ENCODE measurements at regions of chr1 and their contacts with region 1.

Region 1: GRCh38 chr1:53278201-53278725 is 39.9 kb upstream of the MAGOH start:
- H3K4me3 ChIP-seq: no peak overlapping the region
- H3K27ac ChIP-seq: no peak overlapping the region
- H3K4me1 ChIP-seq: no peaks in the 10 kb centered on the region
- CTCF ChIP-seq: peak; percentile 54

Region 2: DNA sequence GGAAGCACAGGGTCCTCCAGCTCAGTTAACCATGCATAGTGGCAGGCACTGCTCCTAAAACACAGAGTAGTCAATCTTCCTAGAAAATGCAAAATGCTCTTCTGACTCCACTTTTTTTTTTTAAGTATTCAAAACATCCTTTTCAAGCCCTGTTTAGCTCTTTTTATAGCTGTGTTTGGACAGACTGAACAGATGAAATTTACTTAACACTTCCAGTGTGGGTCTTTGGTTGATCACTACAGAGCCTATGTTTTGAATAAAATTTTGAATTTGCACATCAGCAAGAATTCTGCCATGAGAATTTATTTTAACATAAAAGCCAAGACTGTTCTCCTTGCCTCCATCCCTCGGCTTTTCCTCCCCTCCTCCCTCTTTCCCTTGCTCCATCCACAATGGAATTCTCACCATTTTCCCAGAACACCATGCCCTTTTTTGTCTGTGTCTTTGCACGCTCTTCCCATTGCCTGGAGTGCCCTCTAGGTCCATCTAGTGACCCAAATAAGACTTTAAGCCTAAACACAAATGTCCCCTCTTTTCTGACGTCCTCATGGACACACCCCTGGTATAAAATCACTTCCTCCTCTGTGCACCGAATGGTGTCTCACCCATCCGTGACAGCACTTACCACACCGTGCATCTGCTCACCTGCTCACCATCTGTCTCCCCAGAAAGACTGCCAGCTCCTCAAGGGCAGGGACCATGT is 105.7 kb before region 1 on chr1:
- CTCF ChIA-PET with region 1: no interaction called
- POLR2A ChIA-PET with region 1: no interaction called
- H3K4me3 ChIP-seq: no peak overlapping the region
- H3K27ac ChIP-seq: no peak overlapping the region
- H3K4me1 ChIP-seq: no peaks in the 10 kb centered on the region; the same call in 1 of the 2 replicates
- CTCF ChIP-seq: no peak

Region 3: DNA sequence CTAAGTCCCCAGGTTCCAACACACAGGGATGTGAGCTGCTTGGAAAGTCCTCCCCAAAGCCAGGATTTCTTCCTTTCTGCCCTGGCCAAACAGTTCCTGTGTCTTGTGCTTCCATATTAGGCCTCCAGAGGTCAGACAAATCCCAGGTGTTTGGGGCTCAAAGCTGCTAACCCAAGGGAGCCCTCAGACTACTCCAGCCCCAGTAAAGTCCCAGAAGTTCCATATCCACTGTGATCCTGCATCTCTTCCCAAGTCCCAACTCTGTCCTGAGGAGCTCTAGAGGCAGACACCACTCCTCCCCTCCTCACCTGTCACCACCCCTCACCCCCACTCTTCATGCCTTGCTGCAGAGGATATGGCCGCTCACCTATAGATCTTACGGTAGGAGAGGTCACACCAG is 12.2 kb before region 1 on chr1:
- CTCF ChIA-PET with region 1: interaction called, 23 read pairs
- POLR2A ChIA-PET with region 1: no interaction called
- H3K4me3 ChIP-seq: no peak overlapping the region
- H3K27ac ChIP-seq: no peak overlapping the region
- H3K4me1 ChIP-seq: no peaks in the 10 kb centered on the region
- CTCF ChIP-seq: peak; percentile 33; the same call in 1 of the 2 replicates

Region 4: DNA sequence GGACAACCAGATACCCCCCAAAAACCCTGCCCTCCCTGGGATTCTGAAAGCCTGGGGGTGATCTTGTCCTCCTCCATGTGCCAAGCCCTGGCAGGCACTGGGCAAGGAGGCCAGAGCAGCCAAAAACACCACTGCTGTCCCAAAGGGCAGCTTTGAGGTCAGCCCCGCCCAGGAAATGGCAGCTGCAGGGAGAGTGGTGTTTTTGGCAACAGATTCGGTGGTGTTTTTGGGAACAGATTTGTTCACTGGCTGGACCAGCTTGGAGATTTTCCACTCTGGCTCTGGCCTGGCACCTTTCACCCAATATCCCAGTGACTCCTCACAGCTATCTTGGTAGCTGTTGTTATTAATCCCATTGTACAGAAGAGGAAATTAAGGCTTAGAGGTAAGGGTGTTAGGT is 14.9 kb after region 1 on chr1:
- CTCF ChIA-PET with region 1: interaction called, 56 read pairs
- POLR2A ChIA-PET with region 1: no interaction called
- H3K4me3 ChIP-seq: no peak overlapping the region
- H3K27ac ChIP-seq: no peak overlapping the region
- H3K4me1 ChIP-seq: no peaks in the 10 kb centered on the region
- CTCF ChIP-seq: no peak

Region 5: DNA sequence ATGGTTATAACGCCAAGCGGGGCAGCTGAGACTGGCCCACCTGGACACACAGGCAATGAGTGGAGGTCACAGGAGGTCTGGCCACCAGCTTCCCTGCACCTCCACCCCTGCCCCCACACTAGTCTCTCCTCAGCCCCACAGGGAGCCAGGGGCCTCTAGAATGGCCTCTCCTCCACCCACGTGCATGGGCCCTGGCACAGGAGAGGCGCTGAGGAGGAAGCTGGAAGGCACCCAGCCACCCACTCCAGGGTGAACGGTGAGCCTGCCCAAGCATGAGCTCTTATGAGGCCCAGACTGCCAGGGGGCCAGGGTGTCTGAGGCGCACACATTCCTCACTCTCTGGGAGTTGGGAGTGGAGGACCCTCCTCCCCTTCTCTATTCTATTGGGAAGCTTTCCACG is 27.4 kb after region 1 on chr1:
- CTCF ChIA-PET with region 1: no interaction called
- POLR2A ChIA-PET with region 1: no interaction called
- H3K4me3 ChIP-seq: no peak overlapping the region
- H3K27ac ChIP-seq: no peak overlapping the region
- H3K4me1 ChIP-seq: no peaks in the 10 kb centered on the region
- CTCF ChIP-seq: no peak

Region 6: GRCh38 chr1:53376041-53376461 is 97.8 kb after region 1 on chr1:
- CTCF ChIA-PET with region 1: interaction called, 12 read pairs
- POLR2A ChIA-PET with region 1: no interaction called
- H3K4me3 ChIP-seq: no peak overlapping the region
- H3K27ac ChIP-seq: no peak overlapping the region
- H3K4me1 ChIP-seq: no peaks in the 10 kb centered on the region
- CTCF ChIP-seq: no peak

Region 7: GRCh38 chr1:53393325-53393792 is 115.1 kb after region 1 on chr1:
- CTCF ChIA-PET with region 1: interaction called, 172 read pairs
- POLR2A ChIA-PET with region 1: interaction called, 3 read pairs
- H3K4me3 ChIP-seq: no peak overlapping the region
- H3K27ac ChIP-seq: no peak overlapping the region
- H3K4me1 ChIP-seq: no peaks in the 10 kb centered on the region
- CTCF ChIP-seq: peak; percentile 76

Region 8: DNA sequence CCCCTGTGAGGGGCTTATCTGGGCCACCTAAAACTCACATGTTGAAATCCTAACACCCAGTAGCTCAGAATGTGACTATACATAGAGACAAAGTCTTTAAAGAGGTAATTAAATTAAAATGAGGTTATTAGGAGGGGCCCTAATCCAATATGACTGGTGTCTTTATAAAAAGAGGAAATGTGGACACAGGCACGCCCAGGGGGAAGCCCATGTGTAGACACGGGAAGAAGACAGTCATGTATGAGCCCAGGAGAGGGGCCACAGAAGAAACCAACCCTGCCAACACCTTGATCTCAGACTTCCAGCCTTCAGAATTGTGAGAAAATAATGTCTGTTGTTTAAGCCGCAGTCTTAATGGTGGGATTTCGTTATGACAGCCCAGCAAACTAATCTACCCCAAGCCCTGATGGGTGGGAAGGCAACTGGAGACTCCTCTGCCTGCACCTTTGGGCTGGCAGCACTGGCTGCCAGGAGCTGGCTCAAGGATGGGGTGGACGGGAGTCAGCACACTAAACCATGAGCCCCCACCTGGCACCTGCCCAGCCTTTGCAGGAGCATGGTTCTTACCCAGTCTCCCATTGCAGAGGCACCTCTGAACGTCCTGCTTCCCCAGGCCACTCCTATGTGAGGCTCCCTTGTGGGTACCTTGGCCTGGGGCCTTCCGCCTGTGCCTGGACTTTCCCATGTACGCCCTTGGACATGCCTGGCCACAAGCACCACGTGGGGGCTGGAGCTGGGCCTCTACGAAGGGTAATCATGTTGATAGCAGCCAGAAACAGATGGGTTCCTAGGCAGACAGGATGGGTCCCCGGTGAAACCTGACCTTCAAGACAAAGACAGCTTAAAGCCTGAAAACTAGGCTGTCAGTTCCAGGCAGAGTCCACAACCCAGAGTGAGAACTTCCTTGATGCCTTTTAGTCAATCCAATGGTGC is 123.8 kb after region 1 on chr1:
- CTCF ChIA-PET with region 1: interaction called, 172 read pairs
- POLR2A ChIA-PET with region 1: no interaction called
- H3K4me3 ChIP-seq: no peak overlapping the region
- H3K27ac ChIP-seq: no peak overlapping the region
- H3K4me1 ChIP-seq: no peaks in the 10 kb centered on the region
- CTCF ChIP-seq: no peak

Measured in HEK293 (cell line).